ENCODE measurements at regions of chrX and their contacts with region 1.

Region 1: DNA sequence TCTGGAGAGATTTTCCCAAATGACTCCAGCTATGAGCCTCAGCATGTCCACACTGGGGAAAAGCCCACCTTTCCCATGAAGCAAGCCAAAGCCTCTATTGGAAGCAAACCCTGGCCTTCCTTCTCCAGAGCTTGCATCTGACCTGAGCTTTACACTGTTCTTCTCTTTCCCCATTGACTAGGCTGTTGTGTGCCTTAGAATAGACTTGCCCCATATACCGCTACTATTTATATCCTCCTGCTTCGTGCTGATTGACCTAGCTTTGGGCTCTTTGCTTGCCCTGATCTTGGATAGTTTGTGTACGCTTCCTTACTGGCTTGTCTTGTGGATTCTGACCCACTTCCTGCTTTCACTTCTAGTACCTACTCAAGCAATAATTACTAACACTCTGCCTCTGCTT is 30.9 kb downstream of the FAM9B start:
- DNase-seq: no peak
- H3K4me3 ChIP-seq: no peak overlapping the region
- CTCF ChIP-seq: no peak
- POLR2A ChIP-seq: no peak

Region 2: DNA sequence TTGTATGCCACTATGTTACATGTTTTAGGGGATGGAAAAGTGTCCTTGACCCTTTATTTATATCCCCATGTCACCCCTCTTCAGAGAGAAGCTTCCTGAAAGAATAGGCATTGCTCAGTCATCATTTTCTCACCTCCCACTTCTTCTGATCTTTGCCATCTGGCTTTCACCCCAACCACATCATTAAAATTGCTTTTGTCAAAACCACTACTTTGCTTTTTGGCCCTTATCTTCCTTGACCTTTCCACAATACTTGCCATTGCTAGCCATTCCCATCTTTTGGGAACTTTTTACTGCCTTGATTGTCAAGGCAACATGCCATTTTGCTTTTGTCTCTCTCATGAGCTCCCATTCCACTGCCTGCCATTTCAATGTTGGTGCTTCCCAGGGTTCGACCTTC is 45.8 kb after region 1 on chrX:
- intact Hi-C with region 1: no loop called
- DNase-seq: no peak
- H3K4me3 ChIP-seq: no peak overlapping the region
- CTCF ChIP-seq: no peak
- POLR2A ChIP-seq: no peak

Region 3: GRCh38 chrX:10794203-10794630 is 1791.2 kb after region 1 on chrX:
- intact Hi-C with region 1: loop called (anchors 5 kb)
- DNase-seq: no peak
- H3K4me3 ChIP-seq: no peak overlapping the region
- CTCF ChIP-seq: no peak
- POLR2A ChIP-seq: no peak

Region 4: GRCh38 chrX:10922158-10922557 is 1919.1 kb after region 1 on chrX:
- intact Hi-C with region 1: no loop called
- DNase-seq: no peak
- H3K4me3 ChIP-seq: no peak overlapping the region
- CTCF ChIP-seq: no peak
- POLR2A ChIP-seq: no peak

Measured in lower leg skin (tissue), 4 donors.